Left lung (tissue), 14 donors: ENCODE measurements at regions of chr5 and their contacts with region 1.

Region 1: GRCh38 chr5:172868924-172869591 is 35.0 kb downstream of the ERGIC1 start:
- DNase-seq: peak in 2 of 4 donors; percentile 85 to 86
- ATAC-seq: peak; percentile 83
- H3K4me3 ChIP-seq: no peak overlapping the region
- H3K27ac ChIP-seq: peak overlapping the region; percentile 84 to 86
- H3K4me1 ChIP-seq: peaks cover 43 to 82% of the 10 kb centered on the region in 2 donors
- H3K27me3 ChIP-seq: no peaks in the 10 kb centered on the region
- CTCF ChIP-seq: no peak

Region 2: DNA sequence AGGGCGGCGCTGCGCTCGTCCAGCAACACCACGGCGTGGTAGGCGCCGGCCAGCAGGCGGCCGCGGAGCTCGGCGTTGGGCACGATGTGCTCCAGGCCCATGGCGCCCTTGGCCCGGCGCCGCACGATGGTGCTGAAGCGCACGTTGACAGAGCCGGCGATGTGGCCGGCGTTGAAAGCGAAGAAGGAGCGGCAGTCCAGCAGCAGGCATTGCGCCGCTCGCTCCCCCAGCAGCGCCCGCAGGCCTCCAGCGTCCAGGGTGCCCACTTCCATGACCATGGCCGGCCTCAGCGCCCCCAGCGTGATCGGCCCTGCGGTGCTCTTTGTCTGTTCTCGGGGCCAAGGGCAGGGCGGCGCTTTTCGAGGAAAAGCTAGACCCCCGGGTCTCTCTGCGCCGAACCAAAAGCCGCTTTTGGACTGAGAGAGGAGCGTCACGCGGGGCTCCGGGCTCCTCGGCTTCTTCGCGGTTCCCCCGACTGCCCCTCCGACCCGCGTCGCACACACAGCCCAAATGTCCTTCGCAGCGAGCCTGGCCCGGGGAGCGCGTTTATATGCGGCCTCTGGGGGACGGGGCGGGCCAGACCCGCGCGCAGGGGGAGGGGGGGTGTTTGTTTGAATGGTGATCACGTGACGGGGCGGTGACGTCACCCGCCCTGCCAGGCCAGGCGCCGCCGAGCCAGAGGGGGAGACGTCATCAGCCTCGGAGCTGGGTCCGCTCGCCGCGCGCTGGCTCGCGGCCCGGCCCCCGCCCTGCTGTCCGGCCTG is 98.2 kb before region 1 on chr5 and contains the start of gene DUSP1:
- intact Hi-C with region 1: loop called in 1 of 2 experiments (anchors 10 kb)
- DNase-seq: peak; percentile 97 to 100 (median 99)
- ATAC-seq: peak; percentile 56
- H3K4me3 ChIP-seq: peak within 1 kb of the TSS; percentile 64 to 93
- H3K27ac ChIP-seq: peak within 1 kb of the TSS; percentile 100
- H3K4me1 ChIP-seq: peaks cover 48 to 83% of the 10 kb centered on the region in 2 donors
- H3K27me3 ChIP-seq: no peaks in the 10 kb centered on the region
- CTCF ChIP-seq: peak; percentile 9 to 57
- polyA plus RNA-seq, gene DUSP1: 33.0 to 534 (median 245) TPM